H1 (cell line): ENCODE measurements at regions of chr21 and their contacts with region 1.

Region 1: DNA sequence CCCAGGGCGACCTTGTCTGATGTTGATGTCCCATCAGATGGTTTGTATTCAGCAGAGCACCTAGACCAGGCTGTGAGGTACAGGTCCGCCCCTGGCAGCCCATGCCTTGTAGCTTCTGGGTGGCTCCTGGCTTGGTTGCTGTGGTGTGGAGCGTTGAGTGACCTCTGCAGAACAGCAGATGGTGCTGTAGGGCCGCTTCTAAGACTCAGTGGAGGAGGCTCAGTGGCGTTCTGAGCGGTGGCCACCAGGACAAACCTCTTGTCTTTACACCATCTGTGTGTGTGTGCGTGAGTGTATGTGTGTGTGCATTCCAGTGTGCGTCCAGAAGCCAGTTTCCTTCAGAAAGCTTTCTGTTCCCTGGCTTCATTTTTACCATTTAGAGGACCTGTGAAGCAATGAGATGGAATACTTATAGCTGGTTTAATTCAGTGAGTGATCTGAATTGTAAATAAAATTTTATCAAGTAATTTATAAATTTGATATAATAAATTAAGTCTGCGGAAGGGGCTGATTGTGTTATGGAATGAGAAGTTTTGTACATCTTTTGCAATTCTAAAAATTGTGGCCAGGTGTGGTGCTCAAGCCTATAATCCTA is 66.1 kb downstream of the ADARB1 start:
- DNase-seq: peak; percentile 68 to 73
- H3K4me3 ChIP-seq: no peak overlapping the region
- H3K27ac ChIP-seq: no peak overlapping the region
- H3K4me1 ChIP-seq: no peaks in the 10 kb centered on the region
- H3K27me3 ChIP-seq: no peaks in the 10 kb centered on the region
- CTCF ChIP-seq: peak; percentile 90 to 99 (median 99)
- EP300 ChIP-seq: no peak
- POLR2A ChIP-seq: no peak
- RAD21 ChIP-seq: peak; percentile 97

Region 2: GRCh38 chr21:44949779-44950198 is 190.7 kb before region 1 on chr21:
- CTCF ChIA-PET with region 1: interaction called, 101 read pairs
- POLR2A ChIA-PET with region 1: no interaction called
- DNase-seq: peak; percentile 53 to 98
- H3K4me3 ChIP-seq: no peak overlapping the region
- H3K27ac ChIP-seq: no peak overlapping the region
- H3K4me1 ChIP-seq: no peaks in the 10 kb centered on the region; a peak in 1 of 7 replicates
- H3K27me3 ChIP-seq: no peaks in the 10 kb centered on the region
- CTCF ChIP-seq: peak in 2 of 3 experiments; percentile 93 to 98; a peak in 3 of 4 replicates
- EP300 ChIP-seq: no peak
- POLR2A ChIP-seq: no peak
- RAD21 ChIP-seq: peak; percentile 89 to 90

Region 3: GRCh38 chr21:44984631-44985440 is 155.6 kb before region 1 on chr21:
- CTCF ChIA-PET with region 1: interaction called, 29 read pairs
- POLR2A ChIA-PET with region 1: interaction called, 6 read pairs
- DNase-seq: no peak
- H3K4me3 ChIP-seq: no peak overlapping the region
- H3K27ac ChIP-seq: no peak overlapping the region
- H3K4me1 ChIP-seq: peaks cover 0 to 3% (median 0%) of the 10 kb centered on the region in 4 experiments; a peak in 1 of 7 replicates
- H3K27me3 ChIP-seq: no peaks in the 10 kb centered on the region; a peak in 3 of 7 replicates
- CTCF ChIP-seq: no peak
- EP300 ChIP-seq: no peak
- POLR2A ChIP-seq: no peak
- RAD21 ChIP-seq: no peak

Region 4: DNA sequence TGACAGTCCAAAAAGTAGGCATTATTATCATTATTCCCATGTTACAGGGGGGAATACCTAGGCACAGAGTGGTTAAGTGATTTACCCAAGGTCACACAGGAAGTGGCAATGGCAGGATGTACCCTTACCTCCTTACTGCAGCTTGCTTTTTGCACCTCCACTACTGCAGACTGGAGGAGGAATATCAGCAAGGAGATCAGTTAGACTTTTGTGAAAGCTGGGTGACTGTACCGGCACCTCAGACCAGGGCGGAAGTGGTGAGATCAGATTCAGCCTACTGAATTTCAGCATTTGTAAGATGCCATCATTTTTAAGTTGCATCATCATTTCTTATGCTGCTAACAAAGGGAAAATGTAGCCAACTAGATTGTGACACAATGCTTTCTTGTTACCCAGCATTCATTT is 61.6 kb before region 1 on chr21:
- CTCF ChIA-PET with region 1: interaction called, 13 read pairs
- POLR2A ChIA-PET with region 1: no interaction called
- DNase-seq: no peak
- H3K4me3 ChIP-seq: no peak overlapping the region
- H3K27ac ChIP-seq: no peak overlapping the region
- H3K4me1 ChIP-seq: peaks cover 0 to 7% (median 2%) of the 10 kb centered on the region in 4 experiments; a peak in 3 of 7 replicates
- H3K27me3 ChIP-seq: peaks cover 4 to 18% (median 14%) of the 10 kb centered on the region in 4 experiments; a peak in 6 of 7 replicates
- CTCF ChIP-seq: no peak
- EP300 ChIP-seq: no peak
- POLR2A ChIP-seq: no peak
- RAD21 ChIP-seq: no peak

Region 5: GRCh38 chr21:45112371-45112770 is 28.1 kb before region 1 on chr21:
- CTCF ChIA-PET with region 1: interaction called, 24 read pairs
- POLR2A ChIA-PET with region 1: interaction called, 4 read pairs
- DNase-seq: no peak
- H3K4me3 ChIP-seq: no peak overlapping the region
- H3K27ac ChIP-seq: no peak overlapping the region
- H3K4me1 ChIP-seq: no peaks in the 10 kb centered on the region
- H3K27me3 ChIP-seq: no peaks in the 10 kb centered on the region
- CTCF ChIP-seq: no peak
- EP300 ChIP-seq: no peak
- POLR2A ChIP-seq: no peak
- RAD21 ChIP-seq: no peak

Region 6: GRCh38 chr21:45167796-45168222 is 27.4 kb after region 1 on chr21:
- CTCF ChIA-PET with region 1: interaction called, 107 read pairs
- POLR2A ChIA-PET with region 1: no interaction called
- DNase-seq: no peak
- H3K4me3 ChIP-seq: no peak overlapping the region
- H3K27ac ChIP-seq: no peak overlapping the region
- H3K4me1 ChIP-seq: no peaks in the 10 kb centered on the region
- H3K27me3 ChIP-seq: no peaks in the 10 kb centered on the region
- CTCF ChIP-seq: no peak
- EP300 ChIP-seq: no peak
- POLR2A ChIP-seq: no peak
- RAD21 ChIP-seq: no peak

Region 7: DNA sequence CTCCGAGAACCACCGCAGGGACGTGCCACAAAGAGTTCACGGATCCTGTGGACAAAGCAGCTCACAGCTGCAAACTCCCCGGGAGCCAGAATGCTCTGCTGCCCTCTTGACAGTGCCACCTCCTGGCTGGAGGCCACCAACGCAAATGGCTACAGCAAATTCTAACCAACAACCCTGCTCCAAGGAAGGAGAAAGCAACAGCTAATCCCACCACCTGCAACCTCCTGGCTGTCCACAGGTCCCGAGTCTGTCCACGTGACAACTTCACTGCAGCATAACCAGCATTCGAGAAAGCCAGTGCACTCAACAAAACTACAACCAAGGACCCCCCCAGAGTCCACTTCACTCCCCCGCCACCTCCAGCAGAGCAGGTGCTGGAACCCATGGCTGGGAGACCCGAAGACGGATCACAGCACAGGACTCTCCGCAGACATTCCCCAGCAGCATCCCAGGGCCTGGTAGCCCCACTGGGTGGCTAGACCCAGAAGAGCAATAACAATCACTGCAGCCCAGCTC is 129.9 kb after region 1 on chr21:
- CTCF ChIA-PET with region 1: interaction called, 14 read pairs
- POLR2A ChIA-PET with region 1: no interaction called
- DNase-seq: no peak
- H3K4me3 ChIP-seq: no peak overlapping the region
- H3K27ac ChIP-seq: no peak overlapping the region
- H3K4me1 ChIP-seq: no peaks in the 10 kb centered on the region
- H3K27me3 ChIP-seq: no peaks in the 10 kb centered on the region
- CTCF ChIP-seq: peak; percentile 65 to 74 (median 69)
- EP300 ChIP-seq: no peak
- POLR2A ChIP-seq: no peak
- RAD21 ChIP-seq: peak; percentile 32 to 53

Region 8: DNA sequence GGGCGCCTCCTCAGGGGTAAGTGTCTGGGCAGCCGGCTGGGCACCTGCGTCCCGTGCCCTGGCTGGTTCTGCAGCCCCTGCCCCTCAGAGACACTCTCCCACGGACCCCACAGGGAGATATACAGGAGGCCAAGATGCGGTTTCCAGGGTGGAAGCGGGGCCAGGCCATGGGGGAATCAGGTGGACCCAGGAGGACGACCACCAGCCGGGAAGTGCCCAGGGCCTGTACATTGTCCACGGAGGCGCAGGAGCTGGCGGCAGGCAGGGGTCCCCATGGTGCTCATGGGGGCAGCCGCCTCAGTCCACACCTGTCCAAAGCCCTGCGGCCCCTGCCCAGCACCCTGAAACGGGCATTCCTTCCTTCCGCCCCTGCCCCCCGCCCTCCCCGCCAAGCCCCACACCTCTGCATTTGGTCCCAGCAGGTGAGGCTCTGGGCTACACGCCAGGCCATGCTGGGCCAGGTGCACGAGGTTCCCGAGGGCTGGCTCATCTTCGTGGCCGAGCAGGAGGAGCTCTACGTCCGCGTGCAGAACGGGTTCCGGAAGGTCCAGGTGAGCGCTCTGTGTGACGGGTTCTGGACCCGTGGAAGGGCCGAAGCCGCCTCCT is 365.1 kb after region 1 on chr21:
- CTCF ChIA-PET with region 1: no interaction called
- POLR2A ChIA-PET with region 1: no interaction called
- DNase-seq: no peak
- H3K4me3 ChIP-seq: no peak overlapping the region
- H3K27ac ChIP-seq: no peak overlapping the region
- H3K4me1 ChIP-seq: no peaks in the 10 kb centered on the region; a peak in 1 of 7 replicates
- H3K27me3 ChIP-seq: no peaks in the 10 kb centered on the region
- CTCF ChIP-seq: no peak
- EP300 ChIP-seq: no peak
- POLR2A ChIP-seq: no peak
- RAD21 ChIP-seq: no peak